ENCODE measurements at regions of chr20 and their contacts with region 1.

Region 1: GRCh38 chr20:38221119-38221589 is 39.4 kb downstream of the KIAA1755 start:
- DNase-seq: no peak
- H3K4me3 ChIP-seq: no peak overlapping the region
- H3K27me3 ChIP-seq: no peaks in the 10 kb centered on the region
- CTCF ChIP-seq: peak; percentile 96

Region 2: DNA sequence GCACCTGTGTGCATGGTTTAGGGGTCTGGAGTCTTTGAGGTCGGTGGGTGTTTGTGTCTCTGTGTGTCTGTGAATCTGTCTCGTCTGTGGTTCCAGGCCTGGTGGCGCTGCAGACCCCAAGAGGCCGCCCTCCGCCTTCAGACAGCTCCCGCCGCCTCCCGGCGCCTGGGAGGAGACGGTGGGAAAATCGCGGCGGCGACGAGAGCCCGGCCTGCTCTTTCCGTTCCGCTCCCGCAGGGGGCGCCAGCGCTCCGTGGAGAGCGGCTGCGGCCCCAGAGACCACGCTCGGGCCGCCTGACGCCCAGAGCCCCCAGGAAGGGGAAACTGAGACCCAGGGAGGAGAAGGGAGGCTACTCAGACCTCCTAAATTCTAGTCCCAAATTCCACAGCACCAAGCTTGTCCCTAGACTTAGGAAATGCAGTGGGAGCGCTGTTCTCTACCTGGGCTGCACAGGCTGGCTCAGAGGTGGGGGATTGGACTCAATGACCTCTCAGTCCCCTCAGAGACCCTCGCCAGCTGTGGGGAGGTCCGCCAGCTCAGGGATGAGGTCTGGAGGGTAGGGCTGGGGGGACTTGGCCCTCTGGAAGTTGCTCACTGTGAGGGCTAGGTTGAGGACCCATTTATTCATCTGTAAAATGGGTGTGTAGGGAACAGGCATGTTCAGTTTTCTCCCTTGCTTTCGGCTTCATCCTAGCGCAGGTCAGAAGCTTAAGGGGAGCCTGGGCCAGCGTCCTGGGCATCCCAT is 656.6 kb before region 1 on chr20:
- CTCF ChIA-PET with region 1: interaction called, 31 read pairs
- POLR2A ChIA-PET with region 1: no interaction called
- DNase-seq: no peak
- H3K4me3 ChIP-seq: no peak overlapping the region
- H3K27me3 ChIP-seq: peaks cover 24% of the 10 kb centered on the region
- CTCF ChIP-seq: peak; percentile 95

Region 3: DNA sequence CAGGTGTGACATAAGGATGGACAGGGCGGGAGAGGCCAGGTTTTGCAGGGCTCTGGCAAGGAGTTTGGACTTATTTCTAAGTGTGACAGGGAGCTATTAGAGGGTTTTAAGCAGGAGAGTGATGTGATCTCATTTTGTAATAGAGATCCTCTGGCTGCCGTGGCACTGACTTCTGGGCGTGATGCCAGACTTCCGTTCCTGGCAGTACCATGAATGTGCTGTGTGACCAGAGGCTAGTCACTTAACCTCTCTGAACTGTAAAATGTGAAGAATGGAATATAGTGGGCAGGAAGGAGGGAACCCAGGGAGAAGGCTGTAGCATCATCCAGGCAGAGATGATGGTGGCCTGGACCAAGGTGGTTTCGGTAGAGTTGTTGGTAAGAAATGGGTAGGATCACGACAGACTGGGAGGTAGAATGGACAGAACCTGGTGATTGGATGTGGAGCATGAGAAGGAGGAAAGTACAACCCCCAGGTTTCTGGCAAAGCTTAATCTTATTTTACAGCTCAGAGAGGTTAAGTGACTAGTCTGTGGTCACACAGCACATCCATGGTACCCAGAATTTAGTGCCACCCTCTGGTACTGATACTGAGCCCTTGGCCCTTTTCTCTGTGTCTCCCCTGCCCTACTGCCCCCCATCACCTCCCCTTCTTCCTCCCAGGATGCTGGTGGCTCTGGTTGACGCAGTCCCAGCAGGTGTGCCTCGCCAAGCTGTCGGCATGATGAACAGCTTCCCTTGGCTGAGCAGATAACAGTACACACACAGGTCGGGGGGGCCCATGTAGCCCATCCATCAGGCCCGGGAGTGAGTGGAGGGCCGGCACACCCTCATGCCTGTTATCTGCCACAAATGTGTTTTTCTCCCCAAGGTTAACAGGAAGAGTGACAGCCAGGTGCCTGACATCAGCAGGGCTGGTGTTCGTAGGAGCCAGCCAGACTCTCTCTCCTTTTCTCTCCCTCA is 580.3 kb before region 1 on chr20:
- CTCF ChIA-PET with region 1: no interaction called
- POLR2A ChIA-PET with region 1: no interaction called
- DNase-seq: no peak
- H3K4me3 ChIP-seq: no peak overlapping the region
- H3K27me3 ChIP-seq: no peaks in the 10 kb centered on the region; the same call in 1 of the 2 replicates
- CTCF ChIP-seq: no peak

Region 4: DNA sequence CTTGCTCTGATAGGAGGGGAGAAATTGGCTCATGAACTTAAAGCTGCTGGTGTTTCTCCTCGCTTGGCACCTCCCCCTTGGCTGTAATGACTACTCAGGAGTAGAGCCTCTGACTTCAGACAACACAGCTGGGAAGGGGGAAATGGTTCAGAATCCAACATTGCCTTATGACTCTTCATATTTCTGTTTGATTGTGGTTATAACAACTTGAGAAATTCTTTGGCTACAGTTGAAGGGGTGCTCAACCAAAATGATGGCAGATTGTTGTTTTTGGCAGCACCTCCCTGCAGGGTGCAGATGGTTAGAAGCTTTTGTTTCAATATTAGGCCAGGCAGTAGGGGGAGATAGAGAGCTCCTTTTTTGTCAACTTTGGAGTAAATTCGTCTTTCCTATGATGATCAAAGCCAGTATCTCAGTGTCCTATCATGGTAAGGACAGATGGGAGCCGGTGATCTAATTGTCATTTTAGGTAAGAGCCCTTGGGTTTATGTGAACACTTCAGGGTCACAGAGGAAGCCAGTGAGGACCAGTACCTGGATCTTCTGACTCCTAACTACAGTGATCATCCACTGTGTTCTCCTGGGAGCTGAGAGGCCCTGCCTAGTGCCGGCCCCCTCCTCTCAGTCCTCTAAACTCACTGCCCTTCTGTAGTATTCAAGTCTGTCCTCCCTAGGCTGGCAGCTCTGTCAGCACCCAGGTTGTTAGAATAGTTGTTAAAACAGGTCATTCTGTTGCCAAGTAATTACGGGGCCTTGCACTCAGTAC is 147.7 kb before region 1 on chr20:
- CTCF ChIA-PET with region 1: interaction called, 482 read pairs
- POLR2A ChIA-PET with region 1: interaction called, 4 read pairs
- DNase-seq: peak; percentile 77
- H3K4me3 ChIP-seq: no peak overlapping the region
- H3K27me3 ChIP-seq: no peaks in the 10 kb centered on the region
- CTCF ChIP-seq: peak; percentile 76

Region 5: GRCh38 chr20:38143646-38144554 is 77.3 kb before region 1 on chr20:
- CTCF ChIA-PET with region 1: interaction called, 10 read pairs
- POLR2A ChIA-PET with region 1: interaction called, 10 read pairs
- DNase-seq: peak; percentile 63
- H3K4me3 ChIP-seq: no peak overlapping the region
- H3K27me3 ChIP-seq: no peaks in the 10 kb centered on the region
- CTCF ChIP-seq: no peak

Region 6: GRCh38 chr20:38178065-38178491 is 43.1 kb before region 1 on chr20:
- CTCF ChIA-PET with region 1: interaction called, 223 read pairs
- POLR2A ChIA-PET with region 1: no interaction called
- DNase-seq: no peak
- H3K4me3 ChIP-seq: no peak overlapping the region
- H3K27me3 ChIP-seq: no peaks in the 10 kb centered on the region
- CTCF ChIP-seq: no peak

Region 7: GRCh38 chr20:38290832-38291581 is 69.9 kb after region 1 on chr20:
- CTCF ChIA-PET with region 1: interaction called, 11 read pairs
- POLR2A ChIA-PET with region 1: no interaction called
- DNase-seq: peak; percentile 57
- H3K4me3 ChIP-seq: no peak overlapping the region
- H3K27me3 ChIP-seq: no peaks in the 10 kb centered on the region
- CTCF ChIP-seq: peak; percentile 53

Region 8: DNA sequence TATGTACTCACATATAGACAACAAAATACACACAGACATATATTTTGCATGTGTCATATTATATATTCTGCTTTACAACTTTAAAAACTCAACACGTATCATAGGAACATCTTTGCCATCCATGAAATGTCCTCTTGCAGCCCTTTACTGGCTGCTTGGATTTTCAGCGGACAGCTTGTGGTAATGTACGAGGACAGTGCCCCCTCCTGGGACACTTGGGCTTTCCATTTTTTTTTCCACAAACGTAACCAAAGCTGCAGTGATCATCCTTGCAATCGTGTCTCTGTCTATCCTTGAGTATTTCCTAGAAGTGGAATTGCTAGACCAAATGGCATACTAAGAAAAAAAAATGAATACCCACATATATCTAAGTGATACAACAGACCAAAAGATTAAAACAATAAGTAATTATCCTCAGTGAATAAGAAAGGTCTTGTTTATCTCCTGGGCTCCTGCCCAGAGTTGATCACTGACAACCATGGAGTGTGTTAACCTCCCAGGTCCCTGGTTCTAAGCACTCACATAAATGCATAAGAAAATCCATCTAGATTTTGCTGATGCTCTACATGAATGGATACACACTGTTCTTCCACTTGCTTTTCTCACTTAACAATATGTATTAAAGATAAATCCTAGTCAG is 100.9 kb after region 1 on chr20:
- CTCF ChIA-PET with region 1: interaction called, 27 read pairs
- POLR2A ChIA-PET with region 1: interaction called, 4 read pairs
- DNase-seq: no peak
- H3K4me3 ChIP-seq: no peak overlapping the region
- H3K27me3 ChIP-seq: peaks cover 13% of the 10 kb centered on the region
- CTCF ChIP-seq: peak; percentile 74

Region 9: GRCh38 chr20:38338849-38339520 is 117.8 kb after region 1 on chr20:
- CTCF ChIA-PET with region 1: no interaction called
- POLR2A ChIA-PET with region 1: no interaction called
- DNase-seq: no peak
- H3K4me3 ChIP-seq: no peak overlapping the region
- H3K27me3 ChIP-seq: peaks cover 11% of the 10 kb centered on the region
- CTCF ChIP-seq: peak; percentile 34

Region 10: DNA sequence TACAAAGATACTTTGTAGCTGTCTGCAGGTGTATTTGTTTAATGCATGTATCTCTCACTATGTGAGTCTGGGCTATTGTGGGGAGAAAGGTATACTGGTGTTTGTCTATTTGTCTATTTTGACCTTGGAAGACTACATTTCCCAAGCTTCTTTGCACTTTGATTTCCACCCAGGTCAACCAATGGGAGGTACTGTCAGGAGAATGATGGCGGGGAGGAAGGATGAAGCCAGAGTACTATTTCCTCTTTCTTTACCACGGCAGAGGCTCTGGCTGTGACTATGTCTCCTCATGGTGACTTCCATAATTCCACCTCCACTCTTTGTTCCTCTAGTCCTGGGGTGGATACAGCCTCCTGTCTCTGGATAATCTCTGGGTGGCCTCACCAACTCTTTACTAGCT is 148.2 kb after region 1 on chr20:
- CTCF ChIA-PET with region 1: no interaction called
- POLR2A ChIA-PET with region 1: no interaction called
- DNase-seq: no peak
- H3K4me3 ChIP-seq: no peak overlapping the region
- H3K27me3 ChIP-seq: peaks cover 16% of the 10 kb centered on the region
- CTCF ChIP-seq: no peak